H1 (cell line): ENCODE measurements at regions of chr17 and their contacts with region 1.

Region 1: GRCh38 chr17:30093463-30094147 is 23.0 kb upstream of the NSRP1 start:
- DNase-seq: peak in 1 of 2 experiments; percentile 81
- H3K4me3 ChIP-seq: no peak overlapping the region
- H3K27ac ChIP-seq: no peak overlapping the region
- H3K4me1 ChIP-seq: no peaks in the 10 kb centered on the region
- H3K27me3 ChIP-seq: no peaks in the 10 kb centered on the region
- CTCF ChIP-seq: peak; percentile 18 to 87 (median 76)
- EP300 ChIP-seq: no peak
- POLR2A ChIP-seq: no peak
- RAD21 ChIP-seq: peak; percentile 93 to 96

Region 2: DNA sequence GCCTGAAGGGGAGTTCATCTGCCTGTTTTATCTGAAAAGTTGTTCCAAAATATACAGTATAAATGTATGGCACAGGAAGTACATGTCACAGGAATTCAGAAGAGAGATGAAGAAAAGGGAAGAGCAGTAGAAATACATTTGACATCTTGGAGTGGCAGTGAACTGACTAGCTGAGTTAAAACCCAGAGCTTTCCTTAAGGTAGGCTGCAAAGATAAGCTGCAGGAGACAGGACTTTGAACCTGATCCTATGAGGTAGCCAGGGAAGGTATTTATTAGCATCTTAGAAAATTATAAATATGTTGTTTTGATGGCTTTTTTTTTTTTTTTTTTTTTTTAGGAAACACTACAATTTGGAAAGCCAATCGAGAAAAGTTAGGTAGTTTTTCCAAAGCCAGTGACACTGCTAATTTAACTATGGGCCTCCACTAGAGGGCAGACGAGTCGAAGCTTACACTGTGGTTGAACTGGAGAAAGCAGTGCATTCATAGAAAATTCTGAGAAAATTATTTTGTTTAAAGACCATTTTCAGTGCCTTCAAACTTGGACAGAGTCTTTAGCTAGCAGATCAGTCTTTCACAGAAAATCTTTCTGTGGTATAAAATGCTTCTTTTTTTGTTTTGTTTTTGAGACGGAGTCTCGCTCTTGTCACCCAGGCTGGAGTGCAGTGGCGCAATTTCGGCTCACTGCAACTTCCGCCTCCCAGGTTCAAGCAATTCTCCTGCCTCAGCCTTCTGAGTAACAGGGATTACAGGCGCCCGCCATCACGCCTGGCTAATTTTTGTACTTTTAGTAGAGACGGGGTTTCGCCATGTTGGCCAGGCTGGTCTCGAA is 285.9 kb before region 1 on chr17:
- CTCF ChIA-PET with region 1: interaction called, 15 read pairs
- POLR2A ChIA-PET with region 1: no interaction called
- DNase-seq: peak in 1 of 2 experiments; percentile 72
- H3K4me3 ChIP-seq: no peak overlapping the region
- H3K27ac ChIP-seq: no peak overlapping the region
- H3K4me1 ChIP-seq: no peaks in the 10 kb centered on the region
- H3K27me3 ChIP-seq: no peaks in the 10 kb centered on the region
- CTCF ChIP-seq: peak in 2 of 3 experiments; percentile 64 to 72; a peak in 3 of 4 replicates
- EP300 ChIP-seq: no peak
- POLR2A ChIP-seq: no peak
- RAD21 ChIP-seq: peak; percentile 84 to 85

Region 3: DNA sequence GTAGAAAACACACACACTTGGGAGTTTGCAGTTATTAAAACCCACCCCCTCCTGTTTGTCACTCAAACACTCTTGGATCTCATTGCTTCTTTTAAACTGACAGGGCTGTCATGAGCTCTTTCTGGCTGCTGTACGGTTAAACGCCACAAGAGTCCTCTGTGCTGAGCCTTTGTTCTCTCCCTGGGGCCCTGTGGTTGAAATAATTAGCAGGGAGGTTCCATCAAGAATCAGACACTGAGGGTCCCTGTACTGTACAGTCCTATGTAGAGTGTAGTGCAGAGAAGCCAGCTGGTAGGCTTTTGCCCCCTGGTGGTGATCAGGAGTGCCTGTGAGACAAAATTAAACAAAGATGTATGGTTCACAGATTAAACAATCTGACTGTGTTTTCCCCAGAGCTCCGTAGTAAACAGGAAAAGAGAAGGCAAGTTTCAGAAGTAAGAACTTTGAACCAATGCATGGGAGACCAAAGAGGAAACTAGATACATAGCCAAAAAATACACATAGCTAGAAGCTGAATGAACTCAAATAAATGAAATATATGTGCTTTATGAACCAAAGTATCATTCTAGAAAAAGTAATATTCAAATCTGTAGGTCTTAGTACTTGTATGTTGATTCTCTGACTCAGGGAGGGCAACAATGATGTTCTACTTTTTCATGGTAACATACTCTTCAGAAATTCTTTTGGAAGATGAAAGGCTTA is 162.2 kb before region 1 on chr17:
- CTCF ChIA-PET with region 1: interaction called, 32 read pairs
- POLR2A ChIA-PET with region 1: no interaction called
- DNase-seq: peak in 1 of 2 experiments; percentile 53
- H3K4me3 ChIP-seq: peak overlapping the region; percentile 84 to 96 (median 86); a peak in 5 of 8 replicates
- H3K27ac ChIP-seq: no peak overlapping the region
- H3K4me1 ChIP-seq: peaks cover 0 to 9% (median 2%) of the 10 kb centered on the region in 4 experiments; a peak in 4 of 7 replicates
- H3K27me3 ChIP-seq: peaks cover 0 to 3% (median under 1%) of the 10 kb centered on the region in 4 experiments; a peak in 2 of 7 replicates
- CTCF ChIP-seq: peak; percentile 47 to 82 (median 80)
- EP300 ChIP-seq: no peak
- POLR2A ChIP-seq: no peak
- RAD21 ChIP-seq: peak; percentile 66 to 76

Region 4: GRCh38 chr17:30031214-30031869 is 62.3 kb before region 1 on chr17:
- CTCF ChIA-PET with region 1: interaction called, 18 read pairs
- POLR2A ChIA-PET with region 1: no interaction called
- DNase-seq: no peak
- H3K4me3 ChIP-seq: no peak overlapping the region
- H3K27ac ChIP-seq: no peak overlapping the region
- H3K4me1 ChIP-seq: no peaks in the 10 kb centered on the region
- H3K27me3 ChIP-seq: 0 out of 7 replicates have a peak, but pooled peaks cover 0 to 1% (median 0%) of the 10 kb centered on the region in 4 experiments
- CTCF ChIP-seq: no peak
- EP300 ChIP-seq: no peak
- POLR2A ChIP-seq: no peak
- RAD21 ChIP-seq: no peak

Region 5: GRCh38 chr17:30062372-30062771 is 31.2 kb before region 1 on chr17:
- CTCF ChIA-PET with region 1: interaction called, 23 read pairs
- POLR2A ChIA-PET with region 1: no interaction called
- DNase-seq: no peak
- H3K4me3 ChIP-seq: no peak overlapping the region
- H3K27ac ChIP-seq: no peak overlapping the region
- H3K4me1 ChIP-seq: no peaks in the 10 kb centered on the region
- H3K27me3 ChIP-seq: no peaks in the 10 kb centered on the region
- CTCF ChIP-seq: peak in 2 of 3 experiments; percentile 16 to 28; a peak in 2 of 4 replicates
- EP300 ChIP-seq: no peak
- POLR2A ChIP-seq: no peak
- RAD21 ChIP-seq: no peak